ENCODE measurements at regions of chr5 and their contacts with region 1.

Region 1: GRCh38 chr5:131533836-131534235 is 101.2 kb downstream of the RAPGEF6 start:
- DNase-seq: no peak
- H3K4me3 Mint-ChIP-seq: no peak overlapping the region
- H3K27ac Mint-ChIP-seq: peak overlapping the region; percentile 46
- H3K4me1 Mint-ChIP-seq: peaks cover 76% of the 10 kb centered on the region
- H3K27me3 Mint-ChIP-seq: no peaks in the 10 kb centered on the region

Region 2: DNA sequence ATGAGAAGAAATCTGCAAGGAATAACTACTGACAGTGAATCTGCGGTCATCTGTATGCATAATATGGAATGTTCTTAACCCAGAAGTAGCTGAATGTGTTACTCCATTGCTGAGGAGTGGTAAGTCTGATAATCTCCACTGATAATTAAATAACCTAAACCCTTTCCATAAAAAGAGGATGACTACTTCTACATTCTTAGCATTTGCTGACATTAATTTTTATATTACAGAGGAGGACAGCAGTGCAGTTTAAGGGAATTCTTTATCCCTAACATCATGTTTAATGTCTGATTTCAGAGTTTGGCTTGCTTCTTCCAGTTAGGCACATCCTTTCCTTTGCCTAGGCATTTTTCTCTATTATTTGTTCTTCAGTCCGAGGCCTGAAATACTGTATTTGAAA is 217.8 kb before region 1 on chr5:
- CTCF ChIA-PET with region 1: no interaction called
- DNase-seq: no peak
- H3K4me3 Mint-ChIP-seq: no peak overlapping the region
- H3K27ac Mint-ChIP-seq: no peak overlapping the region
- H3K4me1 Mint-ChIP-seq: peaks cover 73% of the 10 kb centered on the region
- H3K27me3 Mint-ChIP-seq: no peaks in the 10 kb centered on the region

Region 3: DNA sequence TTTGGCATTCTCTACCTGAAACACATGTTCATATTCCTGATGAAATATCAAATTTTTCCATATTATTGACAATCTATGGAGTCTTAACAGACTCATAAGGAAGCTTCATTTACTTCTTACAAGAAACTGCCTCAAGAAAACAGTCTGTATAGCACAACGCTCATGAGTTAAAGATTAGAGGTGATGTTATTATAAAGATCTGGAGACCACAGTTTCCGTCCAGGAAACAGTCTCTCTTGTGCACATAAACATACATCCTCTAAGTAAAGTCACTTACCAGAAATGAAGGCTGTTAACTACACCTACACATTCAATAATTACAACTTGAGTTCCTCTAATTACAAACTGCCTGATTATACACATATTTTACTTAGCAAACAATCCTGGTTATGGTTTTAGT is 14.3 kb after region 1 on chr5:
- CTCF ChIA-PET with region 1: interaction called, 12 read pairs
- DNase-seq: no peak
- H3K4me3 Mint-ChIP-seq: peak overlapping the region; percentile 92
- H3K27ac Mint-ChIP-seq: peak overlapping the region; percentile 97
- H3K4me1 Mint-ChIP-seq: peaks cover 70% of the 10 kb centered on the region
- H3K27me3 Mint-ChIP-seq: no peaks in the 10 kb centered on the region

Measured in activated naive CD4-positive, alpha-beta T cell treated with anti-CD3 and anti-CD28 coated beads, Interleukin-2, amount 10 ng/mL, durations not matched to agents 7 days and 5 days (primary cell).